Heart right ventricle (tissue), 16 donors: ENCODE measurements at regions of chr15 and their contacts with region 1.

Region 1: DNA sequence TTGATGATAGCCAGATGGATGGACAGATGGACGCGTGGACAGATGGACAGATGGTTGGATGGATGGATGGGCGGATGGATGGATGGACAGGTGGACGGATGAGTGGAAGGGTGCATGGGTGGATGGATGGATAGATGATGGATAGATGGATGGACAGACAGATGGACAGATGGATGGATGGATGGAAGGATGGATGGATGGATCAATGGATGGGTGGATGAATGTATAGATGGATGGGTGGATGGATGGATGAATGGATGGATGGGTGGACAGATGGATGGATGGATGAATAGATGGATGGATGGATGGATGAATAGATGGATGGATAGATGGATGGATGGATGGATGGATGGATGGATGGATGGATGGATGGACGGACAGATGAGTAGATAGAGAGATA is 40.9 kb downstream of the GABRB3 start:
- DNase-seq: no peak
- ATAC-seq: no peak
- H3K4me3 ChIP-seq: no peak overlapping the region
- H3K27ac ChIP-seq: no peak overlapping the region
- H3K4me1 ChIP-seq: no peaks in the 10 kb centered on the region
- H3K27me3 ChIP-seq: no peaks in the 10 kb centered on the region
- CTCF ChIP-seq: no peak

Region 2: GRCh38 chr15:26806144-26806543 is 74.2 kb after region 1 on chr15:
- intact Hi-C with region 1: no loop called
- DNase-seq: peak in 1 of 2 donors; percentile 29
- ATAC-seq: peak in 7 of 8 donors; percentile 58 to 96 (median 84)
- H3K4me3 ChIP-seq: no peak overlapping the region
- H3K27ac ChIP-seq: no peak overlapping the region
- H3K4me1 ChIP-seq: peaks cover 0 to 18% (median 0%) of the 10 kb centered on the region in 9 donors
- H3K27me3 ChIP-seq: no peaks in the 10 kb centered on the region
- CTCF ChIP-seq: no peak

Region 3: GRCh38 chr15:27686369-27686768 is 954.4 kb after region 1 on chr15:
- intact Hi-C with region 1: loop called in 1 of 10 experiments (anchors 5 kb)
- DNase-seq: no peak
- ATAC-seq: no peak
- H3K4me3 ChIP-seq: no peak overlapping the region
- H3K27ac ChIP-seq: no peak overlapping the region
- H3K4me1 ChIP-seq: no peaks in the 10 kb centered on the region
- H3K27me3 ChIP-seq: no peaks in the 10 kb centered on the region
- CTCF ChIP-seq: no peak